GM23248 (cell line): ENCODE measurements at regions of chr14 and their contacts with region 1.

Region 1: GRCh38 chr14:89000007-89000942 is 175.8 kb downstream of the TTC8 start:
- DNase-seq: peak; percentile 98
- H3K4me3 ChIP-seq: no peak overlapping the region
- H3K27ac ChIP-seq: peak overlapping the region; percentile 96
- H3K4me1 ChIP-seq: peaks cover 38% of the 10 kb centered on the region
- H3K27me3 ChIP-seq: no peaks in the 10 kb centered on the region

Region 2: DNA sequence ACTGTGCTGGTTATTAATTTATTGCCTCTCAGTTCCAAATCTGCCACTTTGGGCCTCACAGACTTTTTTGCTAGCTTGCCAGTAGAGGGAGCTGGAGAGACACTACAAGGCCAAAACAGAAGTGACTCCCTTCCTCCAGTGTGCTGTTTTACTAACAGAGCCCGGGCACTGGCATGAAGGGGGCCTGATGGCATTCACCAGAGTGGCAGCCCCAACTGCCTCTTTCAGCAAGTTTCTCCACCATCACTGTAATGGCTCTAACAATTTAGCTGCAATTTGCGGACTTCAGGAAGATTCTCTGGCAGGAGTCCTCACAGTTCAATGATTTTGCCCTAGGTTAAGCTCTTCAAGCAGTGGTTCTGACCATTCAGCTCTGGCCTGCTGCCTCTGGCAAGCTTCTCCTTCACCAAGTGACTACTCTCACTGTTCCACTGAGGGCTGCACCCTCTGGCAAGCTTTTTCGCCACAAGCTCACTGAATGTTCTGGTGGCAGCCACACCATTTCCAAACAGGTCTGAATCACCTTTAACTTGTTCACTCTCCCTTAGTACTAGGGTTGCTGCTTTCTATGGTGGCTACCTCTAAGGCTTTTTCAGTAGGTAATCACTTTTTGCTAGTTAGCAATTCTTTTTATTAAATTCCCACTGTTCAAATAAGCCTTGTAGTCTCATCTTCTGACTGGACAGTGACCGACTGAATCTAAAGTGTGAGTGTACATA is 332.6 kb before region 1 on chr14:
- in situ Hi-C with region 1: loop called (anchors 25 kb)
- DNase-seq: peak; percentile 85
- H3K4me3 ChIP-seq: no peak overlapping the region
- H3K27ac ChIP-seq: no peak overlapping the region
- H3K4me1 ChIP-seq: no peaks in the 10 kb centered on the region
- H3K27me3 ChIP-seq: no peaks in the 10 kb centered on the region